GM12878 (cell line): ENCODE measurements at regions of chr16 and their contacts with region 1.

Region 1: GRCh38 chr16:87203060-87203656 is 114.0 kb downstream of the C16orf95 start:
- DNase-seq: no peak
- ATAC-seq: peak; percentile 95
- H3K4me3 ChIP-seq: no peak overlapping the region
- H3K27ac ChIP-seq: no peak overlapping the region
- H3K4me1 ChIP-seq: no peaks in the 10 kb centered on the region
- H3K27me3 ChIP-seq: no peaks in the 10 kb centered on the region
- CTCF ChIP-seq: peak; percentile 66 to 91 (median 90)
- EP300 ChIP-seq: no peak
- POLR2A ChIP-seq: no peak
- RAD21 ChIP-seq: peak; percentile 37

Region 2: DNA sequence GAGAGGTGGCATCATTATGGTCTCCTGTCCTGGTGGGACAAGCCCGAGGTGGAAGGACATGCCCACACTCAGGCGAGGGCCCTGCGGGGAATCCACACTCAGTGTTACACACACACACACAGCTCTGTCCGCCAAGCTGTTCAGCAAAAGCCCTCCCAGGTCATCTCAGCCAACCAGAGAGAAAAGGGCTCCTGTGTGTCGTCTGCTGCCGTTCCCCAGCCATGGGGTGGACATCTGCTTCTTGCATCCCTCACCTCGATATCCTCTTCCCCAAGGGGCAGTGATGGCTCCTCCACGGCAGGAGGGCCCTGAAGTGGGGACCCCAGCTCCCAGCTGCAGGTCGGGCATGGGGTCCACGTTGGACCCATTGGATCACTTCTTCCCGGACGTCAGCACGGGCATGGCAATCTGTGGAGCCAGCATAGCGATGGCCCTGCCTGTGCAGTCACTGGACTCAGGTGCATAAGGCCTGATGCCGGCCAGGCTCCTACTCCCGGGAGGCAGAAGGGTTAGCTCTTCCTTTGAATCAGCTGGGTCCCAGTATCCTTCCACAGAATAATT is 176.0 kb before region 1 on chr16:
- CTCF ChIA-PET with region 1: no interaction called
- POLR2A ChIA-PET with region 1: no interaction called
- RAD21 ChIA-PET with region 1: no interaction called
- SMC1A ChIA-PET with region 1: no interaction called
- in situ Hi-C with region 1: no loop called
- intact Hi-C with region 1: no loop called
- DNase-seq: no peak
- ATAC-seq: no peak
- H3K4me3 ChIP-seq: no peak overlapping the region
- H3K27ac ChIP-seq: no peak overlapping the region
- H3K4me1 ChIP-seq: no peaks in the 10 kb centered on the region
- H3K27me3 ChIP-seq: no peaks in the 10 kb centered on the region
- CTCF ChIP-seq: no peak
- EP300 ChIP-seq: no peak
- POLR2A ChIP-seq: no peak
- RAD21 ChIP-seq: no peak

Region 3: DNA sequence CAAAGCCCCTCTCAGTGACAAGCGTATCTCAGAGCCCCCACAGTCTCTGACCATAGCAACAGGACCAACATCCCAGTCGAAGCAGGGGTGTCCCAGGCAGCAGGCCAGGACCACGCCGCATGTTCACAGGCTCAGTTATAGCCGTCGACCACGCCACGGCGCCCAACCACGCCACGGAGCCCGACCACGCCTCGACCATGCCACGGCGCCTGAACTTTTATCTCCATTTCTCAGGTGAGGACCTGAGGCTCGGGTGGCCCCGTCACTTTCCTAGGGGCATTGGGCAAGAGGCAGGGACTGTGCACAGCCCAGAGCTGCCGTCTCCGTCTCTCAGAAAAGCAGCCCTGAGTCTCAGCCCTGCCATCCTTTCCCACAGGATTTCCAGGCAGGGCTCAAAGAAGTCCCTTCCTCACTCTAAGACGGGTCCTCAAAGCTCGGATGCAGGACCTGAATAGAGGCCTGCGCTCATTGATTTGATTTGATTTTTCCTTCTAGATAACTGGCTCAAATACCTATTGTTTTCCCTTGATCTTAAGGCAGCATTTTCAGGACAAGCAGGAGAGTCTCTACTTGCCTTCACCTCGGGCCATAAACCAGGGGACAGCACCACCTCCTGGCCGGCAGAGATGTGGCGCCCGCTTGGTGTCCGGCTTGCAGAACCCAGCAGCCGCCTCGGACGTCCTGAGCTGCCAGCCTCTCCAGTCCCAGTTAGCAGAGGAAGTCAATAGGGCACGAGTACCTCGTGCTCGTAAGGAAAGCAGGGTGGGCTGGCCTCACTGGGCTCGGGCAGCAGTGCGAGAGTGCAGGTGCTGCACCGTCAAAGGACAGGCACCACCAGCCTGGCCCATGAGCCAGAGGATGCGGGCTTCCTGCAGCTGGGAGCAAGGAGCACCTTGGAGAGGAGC is 75.3 kb after region 1 on chr16:
- CTCF ChIA-PET with region 1: interaction called, 12 read pairs
- POLR2A ChIA-PET with region 1: no interaction called
- RAD21 ChIA-PET with region 1: no interaction called
- SMC1A ChIA-PET with region 1: interaction called, 3 read pairs
- in situ Hi-C with region 1: no loop called
- intact Hi-C with region 1: loop called (anchors 1 kb)
- DNase-seq: no peak
- ATAC-seq: peak; percentile 97
- H3K4me3 ChIP-seq: no peak overlapping the region
- H3K27ac ChIP-seq: no peak overlapping the region
- H3K4me1 ChIP-seq: no peaks in the 10 kb centered on the region
- H3K27me3 ChIP-seq: no peaks in the 10 kb centered on the region
- CTCF ChIP-seq: peak; percentile 77 to 84 (median 82)
- EP300 ChIP-seq: no peak
- POLR2A ChIP-seq: no peak
- RAD21 ChIP-seq: peak; percentile 69